Right cardiac atrium (tissue), 5 donors: ENCODE measurements at regions of chr4 and their contacts with region 1.

Region 1: GRCh38 chr4:22688236-22688635 is 4.5 kb upstream of the GBA3 start:
- DNase-seq: no peak
- ATAC-seq: no peak
- H3K4me3 ChIP-seq: no peak overlapping the region
- H3K27ac ChIP-seq: no peak overlapping the region
- H3K4me1 ChIP-seq: no peaks in the 10 kb centered on the region
- H3K27me3 ChIP-seq: no peaks in the 10 kb centered on the region

Region 2: GRCh38 chr4:21790438-21791029 is 897.7 kb before region 1 on chr4:
- intact Hi-C with region 1: loop called in 3 of 4 experiments (anchors 5 to 10 kb)
- DNase-seq: no peak
- ATAC-seq: no peak
- H3K4me3 ChIP-seq: no peak overlapping the region
- H3K27ac ChIP-seq: no peak overlapping the region
- H3K4me1 ChIP-seq: no peaks in the 10 kb centered on the region
- H3K27me3 ChIP-seq: no peaks in the 10 kb centered on the region

Region 3: DNA sequence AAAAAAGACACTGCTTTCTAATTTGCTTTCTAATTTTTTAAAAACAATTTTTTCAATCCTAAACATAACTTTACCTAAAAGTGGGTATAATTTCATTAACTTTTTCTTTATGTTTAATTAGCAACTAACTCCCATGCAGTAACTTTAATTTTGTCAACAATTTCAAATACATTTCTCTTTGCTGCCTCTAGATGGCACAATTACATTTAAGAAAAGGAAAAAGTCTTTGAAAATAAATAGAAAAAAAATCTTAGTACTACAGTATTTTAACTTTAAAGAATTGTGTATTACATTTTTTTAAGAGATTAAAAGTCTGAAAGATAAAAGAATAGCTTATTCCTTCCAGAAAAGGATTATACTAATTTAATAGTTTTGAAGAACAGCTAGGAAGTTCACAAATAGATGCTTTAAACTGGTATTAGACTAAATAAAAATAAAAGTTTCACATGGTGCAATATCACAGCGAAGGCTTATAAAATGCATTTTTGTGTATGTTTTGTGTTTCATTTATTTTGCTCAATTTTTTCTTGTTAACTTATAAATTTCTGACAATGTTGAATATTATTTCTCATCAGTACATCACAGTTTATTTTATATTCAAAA is 277.5 kb before region 1 on chr4:
- intact Hi-C with region 1: loop called (anchors 5 to 10 kb)
- DNase-seq: no peak
- ATAC-seq: no peak
- H3K4me3 ChIP-seq: no peak overlapping the region
- H3K27ac ChIP-seq: no peak overlapping the region
- H3K4me1 ChIP-seq: no peaks in the 10 kb centered on the region
- H3K27me3 ChIP-seq: no peaks in the 10 kb centered on the region

Region 4: DNA sequence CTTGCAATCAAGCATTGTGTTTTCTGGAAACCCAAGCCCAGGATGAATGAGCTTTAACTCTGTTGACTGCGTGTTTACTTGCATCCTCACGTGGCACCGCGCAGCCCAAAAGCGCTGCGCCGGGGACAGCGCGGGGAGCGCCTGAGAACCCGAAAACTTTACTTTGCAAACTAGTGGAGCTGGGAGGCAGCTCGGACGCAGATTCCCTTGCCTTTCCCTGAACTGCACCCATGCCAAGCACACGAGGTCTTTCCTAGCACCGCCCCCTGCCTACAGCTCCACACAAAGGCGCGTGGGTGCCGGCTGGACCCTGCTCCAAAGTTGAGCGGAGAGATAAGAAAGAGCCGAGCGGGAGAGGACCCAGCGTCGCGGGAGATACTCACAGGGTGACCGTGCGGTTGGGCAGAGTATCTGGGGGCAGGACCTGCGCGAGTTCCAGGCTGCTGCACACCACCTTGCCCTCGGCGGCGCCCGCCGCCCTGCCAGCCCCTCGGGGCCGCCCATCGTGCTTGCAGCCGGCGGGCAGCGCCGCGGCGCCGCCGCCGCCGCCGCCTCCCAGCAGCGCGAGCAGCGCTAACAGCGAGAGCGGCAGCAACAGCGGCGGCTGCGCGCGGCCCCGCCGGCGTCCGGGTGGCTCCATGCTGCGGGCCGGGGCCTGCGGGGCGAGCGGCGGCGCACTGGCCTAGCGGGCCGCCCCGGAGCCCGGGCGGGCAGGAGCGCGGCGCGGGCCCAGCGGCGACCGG is 172.9 kb before region 1 on chr4:
- intact Hi-C with region 1: loop called in 1 of 4 experiments (anchors 10 kb)
- DNase-seq: peak; percentile 69 to 82 (median 82)
- ATAC-seq: peak; percentile 70 to 76
- H3K4me3 ChIP-seq: peak overlapping the region; percentile 67
- H3K27ac ChIP-seq: peak overlapping the region; percentile 27
- H3K4me1 ChIP-seq: peaks cover 2% of the 10 kb centered on the region
- H3K27me3 ChIP-seq: no peaks in the 10 kb centered on the region